ENCODE measurements at regions of chr12 and their contacts with region 1.

Region 1: GRCh38 chr12:44930972-44931600 is 55.0 kb upstream of the NELL2 start:
- DNase-seq: no peak
- H3K4me3 ChIP-seq: no peak overlapping the region
- H3K27ac ChIP-seq: no peak overlapping the region
- H3K27me3 ChIP-seq: no peaks in the 10 kb centered on the region
- CTCF ChIP-seq: peak; percentile 59 to 93 (median 80)

Region 2: GRCh38 chr12:43957732-43958372 is 973.2 kb before region 1 on chr12:
- intact Hi-C with region 1: loop called in 1 of 2 experiments (anchors 2 kb)
- DNase-seq: peak in 2 of 10 donors; percentile 10 to 27
- H3K4me3 ChIP-seq: no peak overlapping the region
- H3K27ac ChIP-seq: no peak overlapping the region
- H3K27me3 ChIP-seq: no peaks in the 10 kb centered on the region
- CTCF ChIP-seq: peak; percentile 16 to 82 (median 62)

Region 3: GRCh38 chr12:44015335-44015941 is 915.6 kb before region 1 on chr12:
- intact Hi-C with region 1: loop called (anchors 10 kb)
- DNase-seq: no peak
- H3K4me3 ChIP-seq: no peak overlapping the region
- H3K27ac ChIP-seq: peak overlapping the region in 10 of 59 donors; percentile 25 to 67 (median 34)
- H3K27me3 ChIP-seq: no peaks in the 10 kb centered on the region
- CTCF ChIP-seq: peak; percentile 41 to 88 (median 68)

Region 4: DNA sequence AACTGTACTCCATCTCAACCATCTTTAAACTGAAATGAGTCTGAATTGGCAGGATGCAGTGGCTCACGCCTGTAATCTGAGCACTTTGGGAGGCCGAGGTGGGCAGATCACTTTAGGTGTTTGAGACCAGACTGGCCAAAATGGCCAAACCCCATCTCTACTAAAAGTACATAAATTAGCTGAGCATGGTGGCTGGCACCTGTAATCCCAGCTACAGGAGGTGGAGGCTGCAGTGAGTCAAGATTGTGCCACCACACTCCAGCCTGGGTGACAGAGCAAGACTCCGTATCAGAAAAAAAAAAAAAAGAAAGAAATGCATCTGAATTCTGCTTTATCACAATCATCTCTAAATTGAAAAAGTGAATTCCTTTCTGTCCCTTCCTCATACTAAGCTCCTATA is 165.3 kb before region 1 on chr12:
- intact Hi-C with region 1: no loop called
- DNase-seq: no peak
- H3K4me3 ChIP-seq: no peak overlapping the region
- H3K27ac ChIP-seq: no peak overlapping the region
- H3K27me3 ChIP-seq: no peaks in the 10 kb centered on the region
- CTCF ChIP-seq: no peak

Measured in dorsolateral prefrontal cortex (tissue), 120 donors.